Colonic mucosa (tissue), 4 donors: ENCODE measurements at regions of chr4 and their contacts with region 1.

Region 1: DNA sequence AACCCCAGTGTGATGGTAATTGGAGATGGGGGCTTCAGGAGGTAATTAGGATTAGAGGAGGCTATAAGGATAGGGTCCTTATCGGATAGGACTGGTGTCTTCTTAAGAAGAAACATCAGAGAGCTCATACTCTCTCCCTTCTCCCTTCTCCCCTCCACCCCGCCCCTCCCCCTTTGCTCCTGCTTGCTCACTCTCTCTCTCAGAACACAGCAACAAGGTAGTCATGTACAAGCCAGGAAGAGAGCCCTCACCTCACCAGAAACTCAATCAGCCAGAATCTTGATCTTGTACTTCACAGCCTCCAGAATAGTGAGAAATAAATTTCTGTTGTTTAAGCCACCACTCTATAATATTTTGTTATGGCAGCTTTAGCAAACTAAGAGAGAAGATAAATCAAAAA is 4.5 kb downstream of the DDX60L start:
- DNase-seq: no peak
- H3K4me3 ChIP-seq: no peak overlapping the region
- H3K27ac ChIP-seq: no peak overlapping the region
- H3K4me1 ChIP-seq: no peaks in the 10 kb centered on the region
- H3K27me3 ChIP-seq: no peaks in the 10 kb centered on the region
- CTCF ChIP-seq: no peak

Region 2: DNA sequence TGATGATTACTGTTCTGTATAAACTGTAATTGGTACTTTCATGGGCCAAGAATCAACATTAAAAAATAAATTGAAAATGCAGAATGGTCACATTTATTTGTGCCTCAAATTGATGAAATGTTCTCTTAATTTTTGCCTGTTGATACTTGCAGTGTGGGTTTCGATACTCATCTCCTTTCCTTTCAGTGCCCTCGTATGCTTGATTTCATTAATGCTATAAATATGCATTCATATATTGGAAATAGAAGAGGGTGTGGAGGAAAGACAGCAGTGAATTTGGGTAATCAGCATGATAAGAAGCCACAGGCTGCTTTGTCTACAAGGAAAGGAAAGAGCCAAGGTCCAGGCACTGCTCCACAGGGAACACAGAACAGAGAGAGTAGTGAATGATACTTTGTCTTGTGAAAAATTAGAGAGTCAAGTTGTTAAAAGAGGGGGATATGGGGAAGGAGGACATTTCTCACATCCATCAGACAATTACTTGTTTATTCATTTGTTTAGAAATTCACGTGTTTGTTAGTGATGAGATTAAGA is 156.2 kb before region 1 on chr4:
- intact Hi-C with region 1: loop called (anchors 10 kb)
- DNase-seq: no peak
- H3K4me3 ChIP-seq: no peak overlapping the region
- H3K27ac ChIP-seq: no peak overlapping the region
- H3K4me1 ChIP-seq: no peaks in the 10 kb centered on the region
- H3K27me3 ChIP-seq: no peaks in the 10 kb centered on the region
- CTCF ChIP-seq: no peak

Region 3: DNA sequence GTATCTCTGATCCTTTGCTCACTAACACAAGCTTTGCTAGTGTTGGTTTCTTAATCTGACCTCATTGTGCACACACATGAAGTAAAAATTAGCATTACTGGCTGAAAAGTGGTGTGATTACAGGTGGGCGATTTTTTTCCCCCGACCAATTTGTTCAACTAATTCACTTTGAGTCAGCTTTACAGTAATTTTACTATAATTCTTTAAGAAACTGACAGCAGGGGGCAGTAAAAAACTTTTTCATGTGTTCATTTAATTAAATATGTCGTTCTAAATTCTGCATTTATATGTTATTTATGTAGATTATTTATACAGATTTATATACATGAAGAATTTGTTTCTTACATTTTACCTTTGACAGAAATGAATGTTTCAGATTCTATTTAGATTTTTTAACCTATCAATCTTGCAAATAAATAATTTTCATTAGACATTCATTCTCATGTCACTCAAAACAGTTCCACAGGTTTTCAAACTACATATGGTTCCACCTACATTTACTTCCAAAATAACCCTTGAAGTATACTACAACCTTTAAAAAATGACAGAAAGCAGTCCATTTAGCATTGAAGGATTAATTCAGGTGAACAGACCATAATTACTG is 38.6 kb after region 1 on chr4:
- intact Hi-C with region 1: no loop called
- DNase-seq: no peak
- H3K4me3 ChIP-seq: no peak overlapping the region
- H3K27ac ChIP-seq: no peak overlapping the region
- H3K4me1 ChIP-seq: no peaks in the 10 kb centered on the region
- H3K27me3 ChIP-seq: no peaks in the 10 kb centered on the region
- CTCF ChIP-seq: peak; percentile 41

Region 4: DNA sequence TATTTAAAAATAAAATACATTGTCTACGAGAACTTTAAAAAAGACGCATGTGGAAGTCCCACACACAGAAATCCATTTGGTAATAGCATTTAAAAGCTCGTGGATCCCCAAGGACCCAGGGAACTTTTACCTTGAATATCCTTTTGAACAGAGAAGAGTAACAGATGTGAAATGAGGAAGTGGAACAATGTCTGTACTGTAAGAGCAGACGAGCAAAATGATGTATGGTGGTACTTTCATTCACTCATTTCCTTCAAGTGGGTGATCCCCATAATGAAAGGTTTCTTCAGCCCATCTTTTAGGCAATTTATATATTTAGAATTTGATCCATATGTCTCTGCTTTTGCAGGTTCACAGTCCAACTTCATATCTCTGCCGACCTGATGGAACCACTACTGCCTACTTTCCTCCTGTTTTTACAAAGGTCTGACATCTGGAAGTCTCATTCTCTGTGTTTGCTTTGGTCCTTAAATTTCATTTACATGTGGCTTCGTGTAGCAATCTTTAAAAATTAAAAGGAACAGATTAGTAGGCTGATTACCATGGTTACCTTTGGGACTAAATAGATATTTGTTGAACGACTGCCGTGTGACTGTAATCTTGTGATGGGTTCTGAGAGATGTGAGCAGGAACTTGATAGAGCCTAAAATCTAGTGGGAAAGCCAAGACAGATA is 209.5 kb after region 1 on chr4:
- intact Hi-C with region 1: no loop called
- DNase-seq: no peak
- H3K4me3 ChIP-seq: no peak overlapping the region
- H3K27ac ChIP-seq: no peak overlapping the region
- H3K4me1 ChIP-seq: no peaks in the 10 kb centered on the region
- H3K27me3 ChIP-seq: no peaks in the 10 kb centered on the region
- CTCF ChIP-seq: no peak